ENCODE measurements at regions of chr14 and their contacts with region 1.

Region 1: GRCh38 chr14:23469127-23469905 is at the start of gene NGDN:
- DNase-seq: peak; percentile 76 to 99 (median 96)
- ATAC-seq: peak; percentile 94
- H3K4me3 ChIP-seq: peak within 1 kb of the TSS; percentile 73
- H3K4me3 Mint-ChIP-seq: peak within 1 kb of the TSS in 1 of 10 donors; percentile 77
- H3K27ac ChIP-seq: peak within 1 kb of the TSS; percentile 94
- H3K27ac Mint-ChIP-seq: peak within 1 kb of the TSS in 2 of 9 donors; percentile 26 to 68
- H3K4me1 ChIP-seq: peaks cover 6 to 11% of the 10 kb centered on the region in 2 donors
- H3K4me1 Mint-ChIP-seq: peaks cover 7 to 10% (median 7%) of the 10 kb centered on the region in 7 donors
- H3K27me3 ChIP-seq: no peaks in the 10 kb centered on the region
- H3K27me3 Mint-ChIP-seq: no peaks in the 10 kb centered on the region
- total RNA-seq, gene NGDN: 52.9 to 152 (median 74.0) TPM

Region 2: DNA sequence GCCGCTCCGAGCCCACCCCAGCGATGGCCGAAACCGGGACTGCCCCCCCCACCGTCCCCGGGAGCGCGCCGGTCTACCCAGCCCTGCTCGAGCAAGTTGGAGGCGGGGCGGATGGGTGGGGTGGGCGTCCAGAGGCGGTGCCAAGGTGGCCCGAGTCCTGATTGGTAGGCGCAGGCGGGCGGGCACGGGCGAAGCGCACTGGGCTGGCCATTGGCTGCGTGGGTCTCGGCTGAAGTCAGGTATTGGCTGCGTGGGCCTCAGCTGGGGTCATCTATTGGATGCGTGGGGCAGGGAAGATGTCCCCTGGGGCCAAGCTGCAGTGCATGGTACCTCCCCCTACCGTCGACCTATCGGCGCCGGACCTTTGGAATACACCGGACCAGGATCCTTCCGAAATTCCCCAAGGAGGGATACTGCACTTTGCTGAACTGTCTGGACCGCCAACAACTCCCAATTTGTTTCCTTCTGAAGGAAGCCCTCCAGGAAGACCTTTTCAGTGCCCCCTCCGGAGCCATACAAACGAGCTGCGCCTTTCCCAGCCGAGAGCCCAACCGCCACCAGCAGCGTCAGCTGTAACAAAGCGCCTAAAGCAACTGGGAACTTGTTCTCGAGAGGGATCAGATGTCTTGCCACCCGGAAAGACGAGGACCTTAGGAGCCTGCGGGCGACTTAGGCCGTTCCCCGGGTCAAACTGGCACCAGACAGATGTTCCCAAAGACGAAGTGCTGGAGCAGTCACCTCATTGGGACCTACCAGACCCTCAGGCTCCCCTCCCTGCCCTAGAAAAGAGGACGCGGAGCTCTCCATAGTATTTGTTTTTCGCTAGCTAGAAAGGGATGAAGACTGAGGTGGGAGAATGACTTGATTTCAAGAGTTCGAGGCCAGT is 183.1 kb before region 1 on chr14 and contains the start of gene HOMEZ:
- CTCF ChIA-PET with region 1: no interaction called
- POLR2A ChIA-PET with region 1: no interaction called
- intact Hi-C with region 1: loop called in 1 of 2 experiments (anchors 1 kb)
- DNase-seq: peak; percentile 89 to 97 (median 94)
- ATAC-seq: peak; percentile 99
- H3K4me3 ChIP-seq: peak within 1 kb of the TSS; percentile 84
- H3K4me3 Mint-ChIP-seq: peak within 1 kb of the TSS; percentile 92 to 100 (median 96)
- H3K27ac ChIP-seq: peak within 1 kb of the TSS; percentile 89
- H3K27ac Mint-ChIP-seq: peak within 1 kb of the TSS; percentile 83 to 98 (median 93)
- H3K4me1 ChIP-seq: peaks cover 3 to 6% of the 10 kb centered on the region in 2 donors
- H3K4me1 Mint-ChIP-seq: peaks cover 15 to 37% (median 30%) of the 10 kb centered on the region in 7 donors
- H3K27me3 ChIP-seq: no peaks in the 10 kb centered on the region
- H3K27me3 Mint-ChIP-seq: no peaks in the 10 kb centered on the region
- total RNA-seq, gene HOMEZ: 5.2 to 20.4 (median 15.5) TPM

Region 3: DNA sequence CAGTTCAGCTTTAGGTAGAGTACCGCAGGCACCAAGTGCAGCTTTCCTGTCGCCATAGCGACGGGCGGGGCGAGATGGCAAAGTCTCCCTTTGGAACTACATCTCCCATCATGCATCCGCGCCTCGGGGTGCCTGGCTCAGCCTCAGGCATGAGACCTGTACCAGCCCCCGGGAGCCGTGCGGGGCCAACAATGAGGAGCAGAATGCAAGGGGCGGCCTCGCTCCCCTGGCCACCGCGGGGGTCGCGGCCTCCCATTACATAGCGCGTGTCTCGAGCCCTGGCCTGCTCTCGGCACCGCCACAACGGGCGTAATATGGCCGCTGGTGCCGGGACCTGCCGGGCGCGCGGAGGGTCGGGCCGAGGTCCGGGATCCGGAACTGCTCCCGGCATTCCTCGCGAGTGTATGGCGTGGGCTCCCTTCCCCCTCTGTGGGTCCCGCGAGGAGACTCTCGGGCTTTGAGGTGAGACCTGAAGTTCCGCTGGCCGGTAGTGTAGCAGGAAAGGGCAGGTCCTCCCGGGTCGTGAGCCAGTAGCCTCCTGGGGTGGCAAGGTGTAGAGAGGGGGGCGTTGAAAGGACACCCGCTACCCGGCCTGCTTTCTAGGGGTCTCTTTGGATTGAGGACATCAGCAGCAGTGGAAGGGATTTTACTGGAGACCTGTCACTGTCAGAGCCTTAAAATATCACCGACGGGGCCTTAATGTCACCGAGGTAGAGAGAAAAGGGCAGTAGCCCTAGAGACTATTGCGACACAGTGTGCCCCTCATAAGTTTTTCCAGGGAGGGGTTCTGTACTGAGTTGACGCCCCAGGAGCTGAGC is 86.8 kb after region 1 on chr14 and contains the start of gene THTPA:
- CTCF ChIA-PET with region 1: interaction called, 64 read pairs
- POLR2A ChIA-PET with region 1: interaction called, 3 read pairs
- intact Hi-C with region 1: loop called (anchors 1 kb)
- DNase-seq: peak; percentile 84 to 96 (median 89)
- ATAC-seq: peak; percentile 94
- H3K4me3 ChIP-seq: peak within 1 kb of the TSS; percentile 84
- H3K4me3 Mint-ChIP-seq: peak within 1 kb of the TSS; percentile 80 to 99 (median 96)
- H3K27ac ChIP-seq: peak within 1 kb of the TSS; percentile 83
- H3K27ac Mint-ChIP-seq: peak within 1 kb of the TSS; percentile 78 to 97 (median 94)
- H3K4me1 ChIP-seq: peaks cover 10 to 16% of the 10 kb centered on the region in 2 donors
- H3K4me1 Mint-ChIP-seq: peaks cover 18 to 45% (median 38%) of the 10 kb centered on the region in 7 donors
- H3K27me3 ChIP-seq: no peaks in the 10 kb centered on the region
- H3K27me3 Mint-ChIP-seq: peaks cover 0 to under 1% (median 0%) of the 10 kb centered on the region in 5 donors
- total RNA-seq, gene THTPA: 16.4 to 26.7 (median 19.2) TPM

Region 4: DNA sequence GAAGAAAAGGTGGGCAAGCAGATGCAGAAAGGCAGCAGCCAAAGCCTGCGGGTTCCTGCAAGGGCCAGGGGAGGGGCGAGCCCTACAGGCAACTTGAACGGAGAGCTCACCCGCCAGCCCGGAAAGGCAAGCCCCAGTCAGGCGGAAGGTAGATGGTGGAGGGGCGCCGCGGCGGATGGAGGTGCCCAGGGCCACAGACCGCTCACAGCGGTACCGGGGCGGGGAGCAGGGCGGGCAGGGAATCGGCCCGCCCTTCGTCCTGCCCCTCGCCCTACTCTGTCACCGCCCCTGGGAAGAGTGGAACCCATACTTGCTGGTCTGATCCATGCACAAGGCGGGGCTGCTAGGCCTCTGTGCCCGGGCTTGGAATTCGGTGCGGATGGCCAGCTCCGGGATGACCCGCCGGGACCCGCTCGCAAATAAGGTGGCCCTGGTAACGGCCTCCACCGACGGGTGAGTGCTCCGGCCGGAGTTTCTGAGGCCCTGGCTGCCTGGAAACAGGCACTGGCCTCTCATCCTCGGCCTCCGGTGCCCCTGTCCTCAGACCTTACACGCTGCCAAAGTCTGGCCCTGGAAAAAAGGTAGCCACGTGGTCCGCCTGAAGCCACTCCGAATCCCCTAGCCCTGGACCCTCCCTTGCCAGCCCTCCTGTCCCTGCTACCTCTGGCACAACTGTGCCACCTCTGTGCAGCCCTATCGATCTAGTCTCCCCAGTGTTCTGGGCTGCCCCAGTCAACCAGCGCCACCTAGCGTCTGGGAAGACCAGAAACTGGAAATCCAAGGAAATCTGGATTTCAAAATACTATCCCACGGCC is 484.4 kb after region 1 on chr14 and contains the start of gene DHRS4:
- CTCF ChIA-PET with region 1: no interaction called
- POLR2A ChIA-PET with region 1: no interaction called
- intact Hi-C with region 1: loop called in 1 of 2 experiments (anchors 1 kb)
- DNase-seq: peak; percentile 63 to 84 (median 80)
- ATAC-seq: peak; percentile 94
- H3K4me3 ChIP-seq: peak within 1 kb of the TSS; percentile 77
- H3K4me3 Mint-ChIP-seq: peak within 1 kb of the TSS; percentile 94 to 100 (median 98)
- H3K27ac ChIP-seq: peak within 1 kb of the TSS; percentile 80
- H3K27ac Mint-ChIP-seq: peak within 1 kb of the TSS; percentile 70 to 94 (median 89)
- H3K4me1 ChIP-seq: peaks cover 8 to 17% of the 10 kb centered on the region in 2 donors
- H3K4me1 Mint-ChIP-seq: peaks cover 18 to 35% (median 27%) of the 10 kb centered on the region in 7 donors
- H3K27me3 ChIP-seq: no peaks in the 10 kb centered on the region
- H3K27me3 Mint-ChIP-seq: peaks cover 0 to 1% (median 0%) of the 10 kb centered on the region in 5 donors
- total RNA-seq, gene DHRS4: 7.8 to 19.9 (median 17.5) TPM

Region 5: DNA sequence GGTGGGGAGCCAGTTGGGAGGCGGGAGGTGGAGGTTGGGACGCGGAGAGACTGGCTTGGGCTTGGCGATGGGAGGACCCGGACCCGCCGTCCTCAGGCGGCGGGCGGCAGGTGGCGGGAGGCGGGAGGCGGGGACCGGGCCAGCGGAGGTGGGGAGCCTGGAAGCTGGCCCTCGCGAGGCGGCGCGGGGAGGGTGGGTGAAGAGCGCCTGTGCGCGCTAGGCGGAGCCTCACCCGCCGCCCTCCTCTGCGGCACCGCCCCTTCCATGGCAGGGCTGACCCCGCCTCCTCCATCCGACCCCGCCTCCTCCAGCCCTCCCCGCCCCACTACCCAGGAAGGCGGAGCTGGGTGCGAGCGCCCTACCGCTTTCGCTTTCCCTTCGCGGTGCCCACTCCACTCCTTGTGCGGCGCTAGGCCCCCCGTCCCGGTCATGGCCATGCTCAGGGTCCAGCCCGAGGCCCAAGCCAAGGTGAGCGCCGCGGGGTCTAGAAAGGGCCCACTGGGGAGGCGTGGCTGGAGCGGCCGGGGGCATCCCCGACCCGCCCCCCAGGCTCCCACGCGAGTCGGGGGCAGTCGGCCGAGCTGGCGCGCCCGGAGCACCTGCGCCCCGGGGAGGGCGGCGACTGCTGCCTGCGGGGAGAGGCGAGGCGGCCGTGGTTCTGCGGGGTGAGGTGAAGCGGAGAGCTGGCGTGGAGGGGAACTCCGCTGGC is 666.7 kb after region 1 on chr14 and contains the start of gene PSME1:
- CTCF ChIA-PET with region 1: no interaction called
- POLR2A ChIA-PET with region 1: no interaction called
- intact Hi-C with region 1: no loop called
- DNase-seq: peak; percentile 88 to 97 (median 92)
- ATAC-seq: peak; percentile 99
- H3K4me3 ChIP-seq: peak within 1 kb of the TSS; percentile 83
- H3K4me3 Mint-ChIP-seq: peak within 1 kb of the TSS; percentile 88 to 95 (median 92)
- H3K27ac ChIP-seq: peak within 1 kb of the TSS; percentile 97
- H3K27ac Mint-ChIP-seq: peak within 1 kb of the TSS; percentile 86 to 98 (median 93)
- H3K4me1 ChIP-seq: peaks cover 16 to 37% of the 10 kb centered on the region in 2 donors
- H3K4me1 Mint-ChIP-seq: peaks cover 48 to 71% (median 64%) of the 10 kb centered on the region in 7 donors
- H3K27me3 ChIP-seq: no peaks in the 10 kb centered on the region
- H3K27me3 Mint-ChIP-seq: no peaks in the 10 kb centered on the region
- total RNA-seq, gene PSME1: 189 to 583 (median 202) TPM

Region 6: DNA sequence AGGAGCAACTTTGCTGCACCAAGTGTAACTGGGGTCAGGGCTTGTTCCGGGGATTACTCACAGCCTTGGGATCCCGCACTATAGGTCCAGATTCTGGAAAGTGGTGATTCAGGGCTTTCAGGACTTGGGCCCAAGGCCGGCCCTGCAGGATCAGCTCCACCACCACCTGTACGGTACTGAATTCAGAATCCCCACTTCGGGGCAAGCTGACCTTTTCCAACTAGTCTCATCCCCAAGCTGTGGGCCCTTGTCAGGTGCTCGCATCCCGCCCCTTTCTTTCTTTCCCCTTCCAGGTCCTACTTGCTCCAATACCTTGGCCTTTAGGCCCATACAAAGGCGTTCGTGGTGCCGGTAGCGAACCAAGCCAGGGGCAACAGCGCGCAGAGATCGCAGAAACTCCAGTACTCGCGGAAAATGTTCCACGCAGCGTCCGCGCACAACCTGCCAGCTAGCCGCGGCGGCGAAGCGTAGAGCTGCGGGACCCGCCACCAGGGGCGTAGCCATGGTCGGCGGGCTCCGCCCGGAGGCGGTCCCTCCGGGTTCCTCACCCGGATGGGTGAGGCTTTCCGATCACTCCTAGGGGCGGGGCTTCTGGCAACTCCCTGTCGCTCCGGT is 772.6 kb after region 1 on chr14:
- CTCF ChIA-PET with region 1: no interaction called
- POLR2A ChIA-PET with region 1: no interaction called
- intact Hi-C with region 1: no loop called
- DNase-seq: peak in 7 of 9 donors; percentile 94 to 98 (median 97)
- ATAC-seq: peak; percentile 89
- H3K4me3 ChIP-seq: peak overlapping the region; percentile 78
- H3K4me3 Mint-ChIP-seq: peak overlapping the region; percentile 84 to 99 (median 98)
- H3K27ac ChIP-seq: peak overlapping the region; percentile 98
- H3K27ac Mint-ChIP-seq: peak overlapping the region; percentile 98 to 100 (median 100)
- H3K4me1 ChIP-seq: peaks cover 40 to 41% of the 10 kb centered on the region in 2 donors
- H3K4me1 Mint-ChIP-seq: peaks cover 42 to 71% (median 62%) of the 10 kb centered on the region in 7 donors
- H3K27me3 ChIP-seq: no peaks in the 10 kb centered on the region
- H3K27me3 Mint-ChIP-seq: no peaks in the 10 kb centered on the region

Region 7: GRCh38 chr14:24678801-24679247 is 1209.5 kb after region 1 on chr14:
- CTCF ChIA-PET with region 1: no interaction called
- POLR2A ChIA-PET with region 1: no interaction called
- intact Hi-C with region 1: loop called in 1 of 2 experiments (anchors 10 kb)
- DNase-seq: peak; percentile 45 to 85 (median 78)
- ATAC-seq: peak; percentile 96
- H3K4me3 ChIP-seq: peak overlapping the region; percentile 33
- H3K4me3 Mint-ChIP-seq: peak overlapping the region; percentile 71 to 93 (median 86)
- H3K27ac ChIP-seq: no peak overlapping the region
- H3K27ac Mint-ChIP-seq: peak overlapping the region; percentile 33 to 95 (median 70)
- H3K4me1 ChIP-seq: peaks cover 17 to 44% of the 10 kb centered on the region in 2 donors
- H3K4me1 Mint-ChIP-seq: peaks cover 35 to 65% (median 57%) of the 10 kb centered on the region in 7 donors
- H3K27me3 ChIP-seq: no peaks in the 10 kb centered on the region
- H3K27me3 Mint-ChIP-seq: peaks cover 0 to 4% (median 0%) of the 10 kb centered on the region in 5 donors

Measured in naive thymus-derived CD4-positive, alpha-beta T cell (primary cell).